ENCODE measurements at regions of chr1 and their contacts with region 1.

Region 1: GRCh38 chr1:28199328-28200233 is 23.1 kb upstream of the PTAFR start:
- H3K4me3 Mint-ChIP-seq: no peak overlapping the region
- H3K27ac Mint-ChIP-seq: peak overlapping the region; percentile 12
- H3K4me1 Mint-ChIP-seq: peaks cover 31% of the 10 kb centered on the region
- H3K27me3 Mint-ChIP-seq: no peaks in the 10 kb centered on the region

Region 2: GRCh38 chr1:27830621-27831424 is 368.8 kb before region 1 on chr1 and contains the start of gene PPP1R8:
- intact Hi-C with region 1: loop called (anchors 10 kb)
- H3K4me3 Mint-ChIP-seq: peak within 1 kb of the TSS; percentile 95
- H3K27ac Mint-ChIP-seq: peak within 1 kb of the TSS; percentile 98
- H3K4me1 Mint-ChIP-seq: peaks cover 17% of the 10 kb centered on the region
- H3K27me3 Mint-ChIP-seq: no peaks in the 10 kb centered on the region

Region 3: GRCh38 chr1:28235755-28236655 is 36.4 kb after region 1 on chr1 and contains the start of gene ATP5IF1:
- intact Hi-C with region 1: no loop called
- H3K4me3 Mint-ChIP-seq: no peak within 1 kb of the TSS
- H3K27ac Mint-ChIP-seq: no peak within 1 kb of the TSS
- H3K4me1 Mint-ChIP-seq: peaks cover 13% of the 10 kb centered on the region
- H3K27me3 Mint-ChIP-seq: no peaks in the 10 kb centered on the region

Measured in dendritic cell treated with granulocyte-macrophage colony-stimulating factor and Interleukin-4, amounts not matched to agents 40 ng/mL and 50 ng/mL, for 4 days (primary cell).